Heart left ventricle (tissue), 16 donors: ENCODE measurements at regions of chr5 and their contacts with region 1.

Region 1: DNA sequence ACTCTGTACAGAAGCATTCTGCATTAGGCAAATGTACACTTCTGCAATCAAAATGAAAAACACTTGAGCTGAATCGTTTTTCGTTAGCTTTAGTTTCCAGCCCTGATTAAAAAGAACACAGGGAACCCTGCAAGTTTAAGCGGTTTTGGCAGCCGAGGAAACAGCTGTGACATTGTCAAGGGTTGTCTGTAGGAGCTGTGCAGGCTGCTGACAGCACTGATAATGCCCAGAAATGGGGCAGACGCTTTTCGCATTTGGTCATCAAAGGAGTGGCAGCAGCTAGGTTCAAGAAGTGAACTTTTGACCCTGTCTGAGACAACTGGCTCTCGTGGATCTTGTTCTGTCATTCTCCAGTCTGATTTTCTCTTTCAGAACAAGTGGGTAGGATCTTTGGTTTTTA is 165.6 kb upstream of the CCDC152 start:
- DNase-seq: peak; percentile 67 to 88 (median 77)
- ATAC-seq: peak; percentile 85 to 91 (median 88)
- H3K4me3 ChIP-seq: peak overlapping the region in 2 of 12 donors; percentile 3 to 22
- H3K27ac ChIP-seq: peak overlapping the region in 11 of 12 donors; percentile 30 to 78 (median 57)
- H3K4me1 ChIP-seq: peaks cover 0 to 58% (median 39%) of the 10 kb centered on the region in 12 donors
- H3K27me3 ChIP-seq: no peaks in the 10 kb centered on the region
- CTCF ChIP-seq: no peak
- POLR2A ChIP-seq: no peak

Region 2: DNA sequence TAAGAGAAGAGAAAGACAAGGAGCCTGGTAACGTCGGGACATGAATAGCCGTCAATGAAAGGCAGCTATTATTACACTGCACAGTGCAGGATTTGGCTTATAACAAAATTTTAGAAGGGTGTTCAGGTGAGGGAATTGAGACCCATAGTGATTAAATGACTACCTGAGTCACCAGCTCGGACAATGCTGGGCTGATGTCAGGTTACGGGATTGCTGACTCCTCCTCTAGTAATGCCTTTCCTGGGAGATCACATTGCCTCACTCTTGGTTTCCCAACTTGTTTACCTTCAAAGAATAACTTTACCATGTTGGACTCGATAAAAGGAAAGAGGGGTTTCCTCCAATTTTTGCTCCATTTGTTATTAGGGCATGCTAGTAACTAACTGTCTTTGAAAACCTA is 35.2 kb before region 1 on chr5:
- intact Hi-C with region 1: no loop called
- DNase-seq: no peak
- ATAC-seq: no peak
- H3K4me3 ChIP-seq: no peak overlapping the region
- H3K27ac ChIP-seq: no peak overlapping the region
- H3K4me1 ChIP-seq: peaks cover 0 to 44% (median 10%) of the 10 kb centered on the region in 12 donors
- H3K27me3 ChIP-seq: no peaks in the 10 kb centered on the region
- CTCF ChIP-seq: no peak
- POLR2A ChIP-seq: no peak

Region 3: DNA sequence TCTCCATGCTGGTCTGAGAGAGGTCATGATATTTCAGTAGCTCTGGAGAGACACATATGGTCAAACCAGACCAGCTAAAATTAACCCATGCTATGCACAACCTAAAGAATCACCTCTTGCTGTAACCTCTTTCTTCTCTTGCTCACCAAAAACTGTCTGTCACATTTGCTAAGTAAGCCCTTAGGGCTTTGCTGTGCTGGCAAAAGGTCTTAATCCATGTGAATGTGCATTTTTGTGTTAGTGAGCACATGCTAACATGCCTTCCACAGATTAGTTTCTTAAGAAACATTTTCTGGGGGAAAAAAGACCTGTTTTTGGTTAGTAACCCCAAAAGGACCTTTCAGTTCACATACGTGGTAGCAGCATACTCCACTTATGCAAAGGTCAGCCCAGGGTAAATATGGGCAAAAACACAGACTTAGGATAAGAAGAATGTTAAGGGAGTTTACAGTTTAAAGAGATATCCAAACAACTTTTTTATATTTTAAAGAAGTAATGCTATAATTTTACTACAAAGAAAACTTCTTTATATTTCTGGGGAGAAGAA is 41.4 kb after region 1 on chr5:
- intact Hi-C with region 1: loop called in 1 of 10 experiments (anchors 5 kb)
- DNase-seq: no peak
- ATAC-seq: no peak
- H3K4me3 ChIP-seq: no peak overlapping the region
- H3K27ac ChIP-seq: no peak overlapping the region
- H3K4me1 ChIP-seq: peaks cover 0 to 17% (median 0%) of the 10 kb centered on the region in 12 donors
- H3K27me3 ChIP-seq: no peaks in the 10 kb centered on the region
- CTCF ChIP-seq: no peak
- POLR2A ChIP-seq: no peak

Region 4: GRCh38 chr5:42656651-42657015 is 65.6 kb after region 1 on chr5:
- intact Hi-C with region 1: loop called in 3 of 10 experiments (anchors 5 to 10 kb)
- DNase-seq: no peak
- ATAC-seq: peak in 2 of 4 donors; percentile 49 to 64
- H3K4me3 ChIP-seq: peak overlapping the region in 8 of 12 donors; percentile 1 to 47 (median 26)
- H3K27ac ChIP-seq: no peak overlapping the region
- H3K4me1 ChIP-seq: peaks cover 0 to 29% (median 14%) of the 10 kb centered on the region in 12 donors
- H3K27me3 ChIP-seq: no peaks in the 10 kb centered on the region
- CTCF ChIP-seq: peak in 10 of 12 donors; percentile 10 to 63 (median 40)
- POLR2A ChIP-seq: no peak

Region 5: GRCh38 chr5:42691413-42691937 is 100.5 kb after region 1 on chr5:
- intact Hi-C with region 1: loop called in 2 of 10 experiments (anchors 5 to 10 kb)
- DNase-seq: peak in 4 of 5 donors; percentile 56 to 79 (median 62)
- ATAC-seq: peak; percentile 98 to 99 (median 99)
- H3K4me3 ChIP-seq: no peak overlapping the region
- H3K27ac ChIP-seq: peak overlapping the region in 6 of 12 donors; percentile 2 to 46 (median 28)
- H3K4me1 ChIP-seq: peaks cover 0 to 18% (median 5%) of the 10 kb centered on the region in 12 donors
- H3K27me3 ChIP-seq: no peaks in the 10 kb centered on the region
- CTCF ChIP-seq: peak in 1 of 12 donors; percentile 8
- POLR2A ChIP-seq: no peak